ENCODE measurements at regions of chr12 and their contacts with region 1.

Region 1: GRCh38 chr12:95810411-95810810 is 19.8 kb upstream of the NTN4 start:
- DNase-seq: no peak
- H3K4me3 ChIP-seq: no peak overlapping the region
- H3K27ac ChIP-seq: no peak overlapping the region
- H3K4me1 ChIP-seq: no peaks in the 10 kb centered on the region
- H3K27me3 ChIP-seq: no peaks in the 10 kb centered on the region
- CTCF ChIP-seq: no peak
- POLR2A ChIP-seq: no peak

Region 2: GRCh38 chr12:95574799-95575452 is 235.5 kb before region 1 on chr12:
- intact Hi-C with region 1: loop called (anchors 5 kb)
- DNase-seq: no peak
- H3K4me3 ChIP-seq: no peak overlapping the region
- H3K27ac ChIP-seq: no peak overlapping the region
- H3K4me1 ChIP-seq: no peaks in the 10 kb centered on the region
- H3K27me3 ChIP-seq: no peaks in the 10 kb centered on the region
- CTCF ChIP-seq: peak; percentile 36 to 58 (median 57)
- POLR2A ChIP-seq: no peak

Region 3: GRCh38 chr12:95986635-95987570 is 176.5 kb after region 1 on chr12:
- intact Hi-C with region 1: no loop called
- DNase-seq: no peak
- H3K4me3 ChIP-seq: no peak overlapping the region
- H3K27ac ChIP-seq: no peak overlapping the region
- H3K4me1 ChIP-seq: no peaks in the 10 kb centered on the region
- H3K27me3 ChIP-seq: no peaks in the 10 kb centered on the region
- CTCF ChIP-seq: no peak
- POLR2A ChIP-seq: no peak

Region 4: GRCh38 chr12:96132819-96133218 is 322.4 kb after region 1 on chr12:
- intact Hi-C with region 1: no loop called
- DNase-seq: no peak
- H3K4me3 ChIP-seq: no peak overlapping the region
- H3K27ac ChIP-seq: no peak overlapping the region
- H3K4me1 ChIP-seq: no peaks in the 10 kb centered on the region
- H3K27me3 ChIP-seq: no peaks in the 10 kb centered on the region
- CTCF ChIP-seq: no peak
- POLR2A ChIP-seq: no peak

Region 5: GRCh38 chr12:97512696-97513095 is 1702.3 kb after region 1 on chr12:
- intact Hi-C with region 1: no loop called
- DNase-seq: no peak
- H3K4me3 ChIP-seq: no peak overlapping the region
- H3K27ac ChIP-seq: no peak overlapping the region
- H3K4me1 ChIP-seq: no peaks in the 10 kb centered on the region
- H3K27me3 ChIP-seq: no peaks in the 10 kb centered on the region
- CTCF ChIP-seq: no peak
- POLR2A ChIP-seq: no peak